Ascending aorta (tissue), 2 donors: ENCODE measurements at regions of chr4 and their contacts with region 1.

Region 1: DNA sequence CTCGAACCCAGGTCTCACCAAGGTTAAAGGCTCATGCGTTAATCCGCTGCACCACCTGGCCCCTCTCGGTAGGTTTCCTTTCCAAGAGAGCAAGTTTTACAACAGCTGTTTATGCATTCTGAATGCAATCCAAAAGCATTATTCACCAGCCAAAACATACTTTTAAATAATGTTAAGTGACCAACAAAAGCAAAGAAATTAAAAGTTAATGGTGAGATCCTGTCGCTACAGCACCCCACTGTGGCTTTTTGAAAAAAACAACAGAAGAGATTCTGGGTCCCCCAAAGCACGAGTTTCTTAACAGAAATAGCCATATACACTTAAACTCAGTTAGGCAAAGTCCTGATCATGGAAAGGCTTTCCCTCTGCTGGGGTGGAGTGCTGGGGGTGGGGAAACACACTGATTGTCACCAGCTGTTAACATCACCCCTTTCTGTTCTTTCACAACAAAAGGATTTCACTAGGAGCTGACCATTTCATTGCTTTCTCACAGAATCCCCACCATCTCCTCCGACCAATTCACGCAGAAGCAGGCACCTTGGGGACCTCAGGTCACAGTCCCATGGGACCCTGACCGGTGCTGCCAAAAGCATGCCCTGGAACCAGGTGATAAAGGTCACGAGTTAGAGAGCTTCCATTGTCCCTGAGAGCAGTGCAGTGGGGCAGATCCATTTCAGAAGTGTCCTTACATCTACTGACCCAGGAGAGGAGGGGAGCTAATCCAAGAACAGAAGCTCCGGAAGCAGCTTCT is 51.2 kb downstream of the ZNF827 start:
- DNase-seq: no peak
- H3K4me3 ChIP-seq: peak overlapping the region in 1 of 2 donors; percentile 12
- H3K27ac ChIP-seq: peak overlapping the region; percentile 78 to 81
- H3K4me1 ChIP-seq: peaks cover 5 to 16% of the 10 kb centered on the region in 2 donors
- H3K27me3 ChIP-seq: no peaks in the 10 kb centered on the region
- CTCF ChIP-seq: peak in 1 of 3 experiments; percentile 28

Region 2: DNA sequence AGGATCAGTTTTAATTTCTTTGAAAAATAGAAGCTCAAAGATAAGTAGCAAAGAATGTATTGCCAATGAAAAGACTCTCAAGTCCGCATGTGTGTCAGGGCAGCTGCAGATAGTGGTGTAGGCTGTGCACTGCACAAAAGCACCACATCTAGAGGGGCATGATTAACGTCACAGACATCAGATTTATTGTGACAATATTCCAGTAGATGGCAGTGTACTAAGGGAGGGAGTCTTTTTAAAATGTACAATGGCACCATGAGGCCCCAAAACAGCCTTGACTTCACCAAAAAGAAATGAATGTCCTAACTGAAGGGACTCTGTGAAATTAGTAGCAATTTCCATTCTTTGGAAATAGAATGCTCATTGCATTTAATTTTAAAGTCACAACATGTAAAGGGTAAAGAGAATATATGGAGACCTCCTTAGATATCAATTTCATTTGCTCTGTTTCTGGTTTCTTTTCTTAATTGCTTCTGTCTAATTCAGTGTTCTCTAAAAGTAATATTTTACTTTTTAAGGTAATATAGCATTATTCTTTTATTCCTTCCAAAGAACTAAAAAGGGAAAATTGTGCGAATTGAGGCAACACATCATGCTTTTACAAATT is 47.2 kb before region 1 on chr4:
- intact Hi-C with region 1: loop called (anchors 5 kb)
- DNase-seq: no peak
- H3K4me3 ChIP-seq: no peak overlapping the region
- H3K27ac ChIP-seq: no peak overlapping the region
- H3K4me1 ChIP-seq: no peaks in the 10 kb centered on the region
- H3K27me3 ChIP-seq: no peaks in the 10 kb centered on the region
- CTCF ChIP-seq: peak in 2 of 3 experiments; percentile 37 to 55